ENCODE measurements at regions of chr4 and their contacts with region 1.

Region 1: GRCh38 chr4:112765317-112765975 is 128.5 kb downstream of the LARP7 start:
- H3K4me3 ChIP-seq: no peak overlapping the region
- H3K27ac ChIP-seq: no peak overlapping the region
- H3K4me1 ChIP-seq: 0 out of 2 replicates have a peak, but pooled peaks cover 2% of the 10 kb centered on the region
- CTCF ChIP-seq: no peak

Region 2: GRCh38 chr4:112633477-112634235 is 131.8 kb before region 1 on chr4:
- CTCF ChIA-PET with region 1: interaction called, 32 read pairs
- POLR2A ChIA-PET with region 1: no interaction called
- H3K4me3 ChIP-seq: no peak overlapping the region
- H3K27ac ChIP-seq: no peak overlapping the region
- H3K4me1 ChIP-seq: no peaks in the 10 kb centered on the region
- CTCF ChIP-seq: no peak

Region 3: DNA sequence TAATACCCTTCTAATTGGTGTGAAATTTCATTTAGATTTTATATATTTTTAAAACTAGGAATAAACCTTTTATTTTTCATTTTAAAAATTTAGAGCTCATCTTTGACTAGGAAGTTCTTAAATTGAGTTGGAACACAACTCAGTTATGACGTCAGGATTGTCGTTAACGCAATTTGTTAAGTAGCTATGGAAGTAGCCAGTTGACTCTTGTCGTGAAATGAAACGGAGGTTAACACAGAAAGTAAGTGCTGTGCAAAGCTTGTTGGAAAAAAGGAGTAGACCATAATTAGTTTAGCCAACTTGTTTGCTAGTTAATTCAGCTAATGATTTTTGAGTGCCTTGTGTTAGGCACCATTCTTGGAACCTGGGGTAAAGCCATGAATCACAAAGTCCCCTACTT is 110.2 kb before region 1 on chr4:
- CTCF ChIA-PET with region 1: interaction called, 10 read pairs
- POLR2A ChIA-PET with region 1: no interaction called
- H3K4me3 ChIP-seq: no peak overlapping the region
- H3K27ac ChIP-seq: no peak overlapping the region
- H3K4me1 ChIP-seq: no peaks in the 10 kb centered on the region
- CTCF ChIP-seq: no peak

Region 4: GRCh38 chr4:112775801-112776200 is 10.4 kb after region 1 on chr4:
- CTCF ChIA-PET with region 1: interaction called, 17 read pairs
- POLR2A ChIA-PET with region 1: no interaction called
- H3K4me3 ChIP-seq: no peak overlapping the region
- H3K27ac ChIP-seq: no peak overlapping the region
- H3K4me1 ChIP-seq: no peaks in the 10 kb centered on the region
- CTCF ChIP-seq: no peak